ENCODE measurements at regions of chr17 and their contacts with region 1.

Region 1: DNA sequence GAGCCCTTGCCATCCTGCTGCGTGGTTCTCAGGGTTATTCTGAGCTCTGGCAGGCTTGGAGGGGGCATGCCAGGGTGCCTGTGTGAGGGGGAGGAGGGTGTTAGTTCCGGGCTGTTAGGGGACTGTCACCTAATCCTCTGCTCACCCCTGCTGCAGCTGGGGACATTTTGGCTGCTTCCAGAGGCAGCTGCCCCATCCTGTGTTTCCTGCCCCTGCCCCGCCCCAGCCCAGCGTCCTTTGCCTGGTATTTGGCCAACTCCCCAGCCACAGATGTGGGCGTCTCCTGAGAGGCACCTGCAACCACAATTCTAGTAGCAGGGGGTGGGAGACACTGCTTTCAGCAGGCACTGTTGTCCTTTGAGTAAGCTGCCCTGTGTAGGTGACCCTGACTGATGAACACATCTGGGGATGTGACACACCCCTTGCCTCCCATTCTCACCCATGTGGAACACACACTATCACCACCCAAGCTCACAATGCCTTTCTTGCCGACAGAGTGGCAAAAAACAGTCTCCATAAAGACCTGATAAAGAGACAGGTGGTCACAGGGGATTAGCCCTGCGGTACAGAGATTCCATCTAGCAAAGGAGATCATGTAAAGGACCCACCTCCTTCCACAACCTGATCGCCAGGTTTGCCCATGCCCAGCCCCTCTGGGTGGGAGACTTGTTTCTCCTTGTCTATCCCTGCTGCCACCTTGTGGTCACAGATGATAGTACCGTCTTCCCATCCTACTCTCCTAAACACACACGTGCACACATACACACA is at the start of gene CHRNE:
- DNase-seq: no peak
- ATAC-seq: peak; percentile 38
- total RNA-seq, gene CHRNE: 0.41 TPM

Region 2: GRCh38 chr17:4849011-4849536 is 54.2 kb before region 1 on chr17:
- intact Hi-C with region 1: loop called (anchors 10 kb)
- DNase-seq: no peak
- ATAC-seq: no peak